ENCODE measurements at regions of chr15 and their contacts with region 1.

Region 1: GRCh38 chr15:49290191-49290590 is 120.1 kb downstream of the GALK2 start:
- DNase-seq: no peak
- CTCF ChIP-seq: no peak

Region 2: DNA sequence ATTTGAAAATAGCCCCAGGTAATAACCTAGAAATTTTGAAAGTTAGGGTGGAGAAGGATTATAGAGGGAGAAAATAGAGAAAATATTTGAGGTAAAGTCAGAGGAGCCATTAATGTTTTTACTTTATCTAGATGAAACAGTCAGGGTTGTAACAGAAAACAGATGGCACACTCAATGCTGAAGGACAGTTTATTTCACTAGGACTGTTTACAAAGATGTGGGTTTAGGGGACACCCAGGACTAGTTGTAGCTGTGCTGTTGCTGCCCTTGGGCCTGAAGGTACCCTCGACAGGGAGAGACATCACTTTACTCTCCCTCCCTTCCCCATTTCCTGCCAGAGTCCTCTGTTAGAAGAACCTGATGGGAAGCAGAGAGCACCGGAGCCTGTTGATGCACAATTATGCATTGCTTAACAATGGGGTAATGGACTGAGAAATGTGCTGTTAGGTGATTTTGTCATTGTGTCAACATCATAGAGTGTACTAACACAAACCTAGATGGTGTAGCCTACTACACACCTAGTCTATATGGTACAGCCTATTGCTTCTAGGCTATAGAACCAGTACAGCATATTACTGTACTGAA is 16.4 kb before region 1 on chr15:
- CTCF ChIA-PET with region 1: interaction called, 11 read pairs
- POLR2A ChIA-PET with region 1: no interaction called
- DNase-seq: no peak
- CTCF ChIP-seq: no peak